Common myeloid progenitor, CD34-positive (primary cell): ENCODE measurements at regions of chr3 and their contacts with region 1.

Region 1: DNA sequence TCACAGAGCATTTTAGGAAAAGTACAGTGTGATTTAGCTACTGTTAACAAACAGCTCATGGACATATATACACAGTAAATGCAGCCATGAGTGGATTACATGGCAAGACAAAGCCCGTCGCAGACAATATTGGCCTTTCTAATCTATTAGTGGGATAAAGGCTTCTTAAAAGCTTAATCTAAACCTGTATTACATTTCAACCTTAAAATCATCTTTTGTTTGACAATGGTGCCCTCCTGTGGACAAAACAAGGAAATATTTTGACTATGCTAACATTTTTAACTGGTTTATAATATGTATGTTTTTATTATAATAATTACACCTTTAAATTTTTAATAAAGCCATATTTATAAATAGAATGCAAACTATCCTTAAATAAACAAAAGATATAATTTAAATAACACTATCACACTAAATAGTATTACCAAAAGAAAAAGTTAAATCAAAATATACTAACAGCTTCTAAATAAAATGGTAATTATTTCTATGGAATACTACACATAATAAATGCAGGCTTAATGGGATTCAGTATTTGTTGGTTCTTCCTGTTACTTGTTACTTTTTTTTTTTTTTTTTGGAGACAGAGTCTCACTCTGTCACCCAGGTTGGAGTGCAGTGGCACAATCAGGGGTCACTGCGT is 38.6 kb downstream of the TAFA4 start:
- DNase-seq: peak; percentile 30 to 69 (median 58)
- H3K4me3 ChIP-seq: no peak overlapping the region
- H3K27ac ChIP-seq: no peak overlapping the region
- H3K4me1 ChIP-seq: peaks cover 0 to 4% (median 1%) of the 10 kb centered on the region in 4 experiments
- H3K27me3 ChIP-seq: peaks cover 0 to 10% (median 5%) of the 10 kb centered on the region in 5 experiments

Region 2: GRCh38 chr3:68504201-68504600 is 389.5 kb before region 1 on chr3:
- CTCF ChIA-PET with region 1: no interaction called
- POLR2A ChIA-PET with region 1: no interaction called
- DNase-seq: no peak
- H3K4me3 ChIP-seq: no peak overlapping the region
- H3K27ac ChIP-seq: no peak overlapping the region
- H3K4me1 ChIP-seq: no peaks in the 10 kb centered on the region
- H3K27me3 ChIP-seq: no peaks in the 10 kb centered on the region

Region 3: GRCh38 chr3:68876112-68876713 is 17.5 kb before region 1 on chr3:
- CTCF ChIA-PET with region 1: interaction called, 14 read pairs
- POLR2A ChIA-PET with region 1: no interaction called
- DNase-seq: peak; percentile 64 to 85 (median 79)
- H3K4me3 ChIP-seq: no peak overlapping the region
- H3K27ac ChIP-seq: no peak overlapping the region
- H3K4me1 ChIP-seq: no peaks in the 10 kb centered on the region
- H3K27me3 ChIP-seq: peaks cover 0 to 9% (median 4%) of the 10 kb centered on the region in 5 experiments

Region 4: DNA sequence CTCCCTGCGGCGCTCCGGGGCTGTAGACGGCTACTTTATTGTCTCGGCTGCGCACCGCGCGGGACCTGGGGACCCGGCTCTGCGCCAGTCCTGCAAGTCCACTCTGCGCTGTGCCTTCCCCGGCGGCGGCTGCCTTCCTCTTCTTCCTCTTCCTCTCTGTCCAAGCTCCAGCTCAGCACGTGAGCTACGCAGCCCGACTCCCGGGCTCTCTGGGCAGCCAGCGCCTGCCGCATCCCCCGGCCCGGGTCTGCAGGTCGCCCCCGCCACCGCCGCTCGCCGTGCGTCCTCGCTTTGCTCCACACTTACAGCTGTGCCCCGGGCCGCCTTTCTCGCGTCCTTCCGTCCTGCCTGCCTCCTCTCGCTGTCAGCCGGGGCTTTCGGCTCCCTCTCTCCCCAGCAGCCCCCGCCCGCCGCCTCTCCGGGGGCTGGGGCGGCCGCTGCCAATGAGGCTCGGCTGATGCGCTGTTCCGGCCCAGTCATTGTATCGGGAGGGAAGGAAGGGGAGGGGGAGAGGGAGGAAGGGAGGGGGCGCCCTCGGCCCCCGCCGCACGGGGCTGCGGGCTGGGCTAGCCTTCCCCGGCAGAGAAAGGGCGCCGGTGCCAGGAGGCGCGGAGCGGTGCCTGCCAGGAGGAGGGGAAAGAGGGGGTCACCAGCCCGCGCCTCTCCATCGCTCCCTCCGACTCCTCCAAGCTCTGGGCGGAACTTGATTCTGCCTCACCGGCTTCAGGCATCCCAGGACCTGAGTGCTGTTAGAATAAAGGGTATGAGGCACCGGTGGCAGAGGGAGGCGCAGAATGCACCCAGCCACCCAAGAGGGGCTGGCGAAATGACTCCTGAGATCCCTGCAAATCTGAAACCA is 648.7 kb after region 1 on chr3:
- CTCF ChIA-PET with region 1: no interaction called
- POLR2A ChIA-PET with region 1: no interaction called
- DNase-seq: peak; percentile 2 to 46 (median 32)
- H3K4me3 ChIP-seq: peak overlapping the region; percentile 18 to 69 (median 57)
- H3K27ac ChIP-seq: no peak overlapping the region
- H3K4me1 ChIP-seq: peaks cover 3 to 27% (median 24%) of the 10 kb centered on the region in 4 experiments
- H3K27me3 ChIP-seq: peaks cover 2 to 65% (median 22%) of the 10 kb centered on the region in 5 experiments